MCF 10A (cell line): ENCODE measurements at regions of chr7 and their contacts with region 1.

Region 1: DNA sequence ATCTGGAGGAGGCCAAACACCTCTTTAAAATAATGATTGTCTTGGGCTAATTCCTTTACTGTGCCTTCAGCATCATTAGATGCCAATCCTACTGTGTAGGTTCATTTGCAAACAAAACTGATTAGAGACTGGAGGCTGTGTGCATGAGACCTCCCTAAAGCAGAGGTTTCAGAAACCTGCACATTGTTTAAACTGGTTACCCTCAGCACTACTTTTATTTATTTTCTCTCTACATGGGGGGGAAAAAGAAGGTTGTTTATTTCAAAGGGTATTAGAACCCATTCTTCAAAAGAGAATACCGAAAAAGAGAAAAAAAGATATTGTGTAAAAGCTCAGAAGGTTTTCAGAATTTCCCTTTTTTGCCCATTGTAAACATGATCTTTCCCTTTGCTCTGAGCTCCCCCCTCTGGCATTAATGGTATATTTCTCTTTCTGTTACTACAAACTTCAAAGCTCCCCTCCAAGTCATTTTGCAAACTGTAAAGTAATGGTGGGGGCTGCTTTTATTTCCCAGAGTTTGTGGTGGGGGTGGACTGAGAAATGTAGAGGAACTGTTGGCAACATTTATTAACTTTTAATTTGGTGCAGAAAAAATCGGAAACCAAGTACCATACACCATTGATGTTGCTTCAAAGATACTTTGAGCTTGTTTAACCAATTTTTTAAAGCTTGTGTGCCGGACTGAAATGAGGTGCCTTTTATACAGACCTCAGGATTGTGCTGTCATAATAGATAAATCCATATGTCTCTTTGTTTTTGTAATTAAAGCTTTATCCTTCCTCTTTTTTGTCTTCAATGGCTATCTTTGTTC is 181.4 kb downstream of the EXOC4 start:
- DNase-seq: peak; percentile 43
- H3K4me3 Mint-ChIP-seq: no peak overlapping the region
- H3K27ac Mint-ChIP-seq: no peak overlapping the region
- H3K4me1 Mint-ChIP-seq: peaks cover 47% of the 10 kb centered on the region
- H3K27me3 Mint-ChIP-seq: no peaks in the 10 kb centered on the region
- CTCF ChIP-seq: peak; percentile 50

Region 2: GRCh38 chr7:132318352-132319318 is 1115.6 kb before region 1 on chr7:
- CTCF ChIA-PET with region 1: interaction called, 5 read pairs
- POLR2A ChIA-PET with region 1: no interaction called
- intact Hi-C with region 1: loop called (anchors 10 kb)
- DNase-seq: peak; percentile 79
- H3K4me3 Mint-ChIP-seq: no peak overlapping the region
- H3K27ac Mint-ChIP-seq: no peak overlapping the region
- H3K4me1 Mint-ChIP-seq: no peaks in the 10 kb centered on the region
- H3K27me3 Mint-ChIP-seq: peaks cover 41% of the 10 kb centered on the region
- CTCF ChIP-seq: peak; percentile 87

Region 3: DNA sequence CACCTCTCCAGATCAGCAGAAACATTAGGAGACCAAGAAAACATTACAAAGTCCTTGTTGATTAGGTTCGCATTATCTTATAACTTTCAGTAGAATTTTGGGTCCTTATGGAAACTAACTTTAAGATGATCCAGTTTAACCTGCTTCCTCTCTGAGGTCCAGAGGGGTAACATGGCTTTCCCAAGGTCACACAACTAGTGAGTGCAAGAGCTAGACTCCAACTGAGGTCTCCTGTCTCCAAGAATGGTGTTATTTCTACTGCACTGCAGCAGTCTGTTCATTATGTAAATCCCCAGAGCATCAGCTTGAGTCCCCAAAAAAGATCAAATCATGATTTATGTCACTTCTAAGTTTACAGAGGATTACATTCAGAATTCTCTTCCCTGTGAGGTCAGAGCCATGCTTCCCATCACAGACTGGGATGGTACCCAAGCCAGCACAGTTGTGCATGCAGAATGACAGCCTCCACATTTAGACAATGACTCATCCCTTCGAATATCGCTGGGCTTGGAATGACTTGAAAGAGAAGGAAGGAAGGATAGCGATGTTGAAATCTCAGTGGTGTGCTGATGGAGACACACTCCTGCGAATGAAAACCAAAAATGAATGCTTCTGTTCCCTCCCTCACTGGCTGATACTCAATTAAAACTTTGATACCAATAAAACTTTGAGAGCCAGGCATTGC is 694.8 kb before region 1 on chr7:
- CTCF ChIA-PET with region 1: no interaction called
- POLR2A ChIA-PET with region 1: no interaction called
- intact Hi-C with region 1: loop called (anchors 10 kb)
- DNase-seq: peak; percentile 91
- H3K4me3 Mint-ChIP-seq: no peak overlapping the region
- H3K27ac Mint-ChIP-seq: no peak overlapping the region
- H3K4me1 Mint-ChIP-seq: peaks cover 37% of the 10 kb centered on the region
- H3K27me3 Mint-ChIP-seq: no peaks in the 10 kb centered on the region
- CTCF ChIP-seq: no peak

Region 4: GRCh38 chr7:133230591-133231194 is 203.6 kb before region 1 on chr7:
- CTCF ChIA-PET with region 1: no interaction called
- POLR2A ChIA-PET with region 1: no interaction called
- intact Hi-C with region 1: loop called (anchors 5 kb)
- DNase-seq: peak; percentile 69
- H3K4me3 Mint-ChIP-seq: no peak overlapping the region
- H3K27ac Mint-ChIP-seq: no peak overlapping the region
- H3K4me1 Mint-ChIP-seq: no peaks in the 10 kb centered on the region
- H3K27me3 Mint-ChIP-seq: peaks cover 34% of the 10 kb centered on the region
- CTCF ChIP-seq: peak; percentile 63

Region 5: GRCh38 chr7:133265821-133266220 is 168.4 kb before region 1 on chr7:
- CTCF ChIA-PET with region 1: no interaction called
- POLR2A ChIA-PET with region 1: no interaction called
- intact Hi-C with region 1: no loop called
- DNase-seq: no peak
- H3K4me3 Mint-ChIP-seq: no peak overlapping the region
- H3K27ac Mint-ChIP-seq: no peak overlapping the region
- H3K4me1 Mint-ChIP-seq: peaks cover 15% of the 10 kb centered on the region
- H3K27me3 Mint-ChIP-seq: no peaks in the 10 kb centered on the region
- CTCF ChIP-seq: no peak

Region 6: GRCh38 chr7:133423618-133424017 is 10.6 kb before region 1 on chr7:
- CTCF ChIA-PET with region 1: interaction called, 19 read pairs
- POLR2A ChIA-PET with region 1: interaction called, 4 read pairs
- intact Hi-C with region 1: no loop called
- DNase-seq: no peak
- H3K4me3 Mint-ChIP-seq: no peak overlapping the region
- H3K27ac Mint-ChIP-seq: no peak overlapping the region
- H3K4me1 Mint-ChIP-seq: peaks cover under 1% of the 10 kb centered on the region
- H3K27me3 Mint-ChIP-seq: no peaks in the 10 kb centered on the region
- CTCF ChIP-seq: no peak

Region 7: DNA sequence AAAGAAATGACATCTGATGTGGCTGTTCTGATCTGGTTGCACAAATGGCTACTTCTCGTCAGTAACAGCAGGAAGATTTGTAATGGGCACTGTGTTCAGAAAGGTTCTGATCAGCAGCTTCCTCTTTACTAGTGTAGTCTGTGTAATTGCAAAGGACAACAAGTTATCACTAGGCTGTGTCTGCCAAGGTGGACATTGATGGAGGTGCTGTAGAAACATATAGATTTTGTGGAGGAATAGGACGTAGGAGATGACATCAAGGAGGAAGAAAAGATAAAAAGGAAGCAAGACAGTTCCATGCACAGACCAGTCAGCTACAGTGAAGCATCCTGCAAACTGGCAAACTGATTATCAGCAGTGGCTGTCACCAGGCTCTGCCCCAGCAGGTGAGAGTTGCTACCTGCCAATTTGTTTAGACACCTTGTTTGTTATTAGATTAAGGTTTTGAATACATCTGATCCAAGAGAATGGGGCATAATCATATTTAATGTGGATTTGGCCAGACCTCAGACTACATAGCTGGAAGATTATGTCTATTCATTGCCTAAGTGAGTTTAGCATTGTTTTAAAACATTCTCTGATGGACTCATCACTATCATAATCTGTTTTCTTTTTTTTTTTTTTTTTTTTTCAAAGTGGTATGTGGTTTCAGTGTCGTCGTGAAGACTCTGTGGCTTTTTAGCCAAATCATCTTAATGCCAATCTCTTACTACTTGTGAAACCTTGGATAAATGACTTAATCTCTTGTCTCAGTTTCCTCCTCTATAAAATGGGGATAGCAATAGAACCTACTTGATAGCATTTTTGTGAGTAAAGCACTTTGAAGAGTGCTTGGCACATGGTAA is 275.0 kb after region 1 on chr7:
- CTCF ChIA-PET with region 1: no interaction called
- POLR2A ChIA-PET with region 1: no interaction called
- intact Hi-C with region 1: no loop called
- DNase-seq: no peak
- H3K4me3 Mint-ChIP-seq: no peak overlapping the region
- H3K27ac Mint-ChIP-seq: no peak overlapping the region
- H3K4me1 Mint-ChIP-seq: peaks cover 20% of the 10 kb centered on the region
- H3K27me3 Mint-ChIP-seq: no peaks in the 10 kb centered on the region
- CTCF ChIP-seq: no peak

Region 8: DNA sequence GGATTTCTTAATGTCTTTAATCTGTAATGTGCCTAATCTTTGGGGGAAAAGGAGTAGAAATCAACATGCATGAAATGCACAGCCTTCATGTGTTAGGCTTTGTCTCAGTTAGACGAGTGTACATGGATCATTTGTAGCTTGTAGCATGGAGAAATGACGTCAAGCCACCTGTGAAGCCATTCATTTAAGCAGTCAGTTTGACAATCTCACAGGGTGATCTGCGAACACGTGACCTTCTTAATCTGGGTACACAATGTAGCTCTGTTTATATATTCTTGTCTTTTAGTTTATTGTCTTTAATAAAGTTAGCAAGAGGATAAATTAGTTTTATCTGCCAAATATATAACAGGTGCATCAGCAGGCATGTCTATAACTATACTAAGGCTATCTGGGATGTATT is 340.9 kb after region 1 on chr7:
- CTCF ChIA-PET with region 1: no interaction called
- POLR2A ChIA-PET with region 1: no interaction called
- intact Hi-C with region 1: no loop called
- DNase-seq: no peak
- H3K4me3 Mint-ChIP-seq: no peak overlapping the region
- H3K27ac Mint-ChIP-seq: no peak overlapping the region
- H3K4me1 Mint-ChIP-seq: peaks cover 18% of the 10 kb centered on the region
- H3K27me3 Mint-ChIP-seq: no peaks in the 10 kb centered on the region
- CTCF ChIP-seq: no peak

Region 9: DNA sequence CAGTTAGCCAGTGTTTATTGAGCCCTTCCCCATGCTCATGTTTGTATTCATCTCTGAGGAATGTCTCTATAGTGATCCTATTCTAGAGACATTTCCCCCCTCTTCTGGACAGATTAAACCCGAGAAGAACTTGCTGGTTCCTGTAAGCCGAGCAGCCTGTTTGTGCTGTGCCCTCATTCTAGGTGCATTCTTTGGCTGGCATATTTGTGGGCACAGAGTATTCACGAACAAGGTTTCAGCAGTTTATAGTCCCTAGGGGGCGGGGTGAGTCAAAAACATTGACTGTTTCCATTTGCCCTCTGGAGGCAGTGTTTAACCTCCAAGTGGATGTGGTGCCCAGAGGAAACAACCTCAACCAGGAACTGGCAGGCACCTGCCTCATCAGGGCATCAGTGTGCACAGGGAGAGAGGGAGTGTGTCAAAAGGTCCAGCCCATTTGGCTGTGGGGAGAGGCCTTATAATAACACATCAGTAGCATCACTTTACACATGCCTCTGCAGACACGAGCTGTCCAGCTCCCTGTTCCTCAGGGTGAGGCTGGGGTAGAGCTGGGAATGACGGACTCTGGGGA is 419.5 kb after region 1 on chr7:
- CTCF ChIA-PET with region 1: no interaction called
- POLR2A ChIA-PET with region 1: interaction called, 5 read pairs
- intact Hi-C with region 1: loop called (anchors 2 kb)
- DNase-seq: peak; percentile 94
- H3K4me3 Mint-ChIP-seq: peak overlapping the region; percentile 64
- H3K27ac Mint-ChIP-seq: peak overlapping the region; percentile 94
- H3K4me1 Mint-ChIP-seq: peaks cover 33% of the 10 kb centered on the region
- H3K27me3 Mint-ChIP-seq: no peaks in the 10 kb centered on the region
- CTCF ChIP-seq: peak; percentile 55

Region 10: GRCh38 chr7:134420424-134421125 is 986.3 kb after region 1 on chr7:
- CTCF ChIA-PET with region 1: interaction called, 4 read pairs
- POLR2A ChIA-PET with region 1: no interaction called
- intact Hi-C with region 1: loop called (anchors 1 kb)
- DNase-seq: peak; percentile 88
- H3K4me3 Mint-ChIP-seq: peak overlapping the region; percentile 26
- H3K27ac Mint-ChIP-seq: no peak overlapping the region
- H3K4me1 Mint-ChIP-seq: peaks cover 16% of the 10 kb centered on the region
- H3K27me3 Mint-ChIP-seq: no peaks in the 10 kb centered on the region
- CTCF ChIP-seq: peak; percentile 73